Prostate gland (tissue), 2 donors: ENCODE measurements at regions of chr3 and their contacts with region 1.

Region 1: GRCh38 chr3:150763122-150763841 is at the start of gene SIAH2:
- DNase-seq: peak; percentile 94
- H3K4me3 ChIP-seq: peak within 1 kb of the TSS; percentile 74 to 98
- H3K27ac ChIP-seq: peak within 1 kb of the TSS; percentile 98 to 100
- H3K4me1 ChIP-seq: peaks cover 4% of the 10 kb centered on the region
- H3K27me3 ChIP-seq: no peaks in the 10 kb centered on the region
- CTCF ChIP-seq: peak in 2 of 4 experiments; percentile 36 to 46
- POLR2A ChIP-seq: peak; percentile 72
- total RNA-seq, gene SIAH2: 47.4 to 48.9 TPM

Region 2: DNA sequence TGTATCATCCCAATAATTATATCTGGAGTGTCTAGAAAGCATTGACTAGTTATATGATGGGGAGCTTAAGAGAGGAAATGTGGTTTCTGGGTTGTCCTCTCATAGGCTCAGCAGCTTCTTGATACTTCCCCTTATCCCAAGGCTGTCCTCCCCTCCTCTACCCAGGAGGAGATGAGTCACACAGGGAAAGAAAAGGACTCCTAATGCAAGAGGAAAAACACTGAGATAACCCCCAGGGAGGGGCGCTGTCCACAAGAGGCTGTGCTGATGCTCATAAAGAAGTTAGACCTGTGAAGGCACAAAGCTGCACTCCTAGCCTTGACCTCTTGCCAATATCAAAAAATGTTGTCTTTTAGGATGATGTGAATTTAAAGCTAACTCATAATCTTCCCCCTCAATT is 1800.8 kb before region 1 on chr3:
- intact Hi-C with region 1: loop called (anchors 10 kb)
- DNase-seq: no peak
- H3K4me3 ChIP-seq: no peak overlapping the region
- H3K27ac ChIP-seq: no peak overlapping the region
- H3K4me1 ChIP-seq: no peaks in the 10 kb centered on the region
- H3K27me3 ChIP-seq: no peaks in the 10 kb centered on the region
- CTCF ChIP-seq: no peak
- POLR2A ChIP-seq: no peak

Region 3: GRCh38 chr3:150603153-150603979 is 159.9 kb before region 1 on chr3 and contains the start of gene SELENOT:
- intact Hi-C with region 1: loop called (anchors 10 kb)
- DNase-seq: peak; percentile 93
- H3K4me3 ChIP-seq: peak within 1 kb of the TSS; percentile 60 to 84
- H3K27ac ChIP-seq: peak within 1 kb of the TSS; percentile 95 to 96
- H3K4me1 ChIP-seq: no peaks in the 10 kb centered on the region
- H3K27me3 ChIP-seq: no peaks in the 10 kb centered on the region
- CTCF ChIP-seq: peak in 2 of 4 experiments; percentile 26 to 53
- POLR2A ChIP-seq: peak; percentile 97
- total RNA-seq, gene SELENOT: 123 to 126 TPM

Region 4: DNA sequence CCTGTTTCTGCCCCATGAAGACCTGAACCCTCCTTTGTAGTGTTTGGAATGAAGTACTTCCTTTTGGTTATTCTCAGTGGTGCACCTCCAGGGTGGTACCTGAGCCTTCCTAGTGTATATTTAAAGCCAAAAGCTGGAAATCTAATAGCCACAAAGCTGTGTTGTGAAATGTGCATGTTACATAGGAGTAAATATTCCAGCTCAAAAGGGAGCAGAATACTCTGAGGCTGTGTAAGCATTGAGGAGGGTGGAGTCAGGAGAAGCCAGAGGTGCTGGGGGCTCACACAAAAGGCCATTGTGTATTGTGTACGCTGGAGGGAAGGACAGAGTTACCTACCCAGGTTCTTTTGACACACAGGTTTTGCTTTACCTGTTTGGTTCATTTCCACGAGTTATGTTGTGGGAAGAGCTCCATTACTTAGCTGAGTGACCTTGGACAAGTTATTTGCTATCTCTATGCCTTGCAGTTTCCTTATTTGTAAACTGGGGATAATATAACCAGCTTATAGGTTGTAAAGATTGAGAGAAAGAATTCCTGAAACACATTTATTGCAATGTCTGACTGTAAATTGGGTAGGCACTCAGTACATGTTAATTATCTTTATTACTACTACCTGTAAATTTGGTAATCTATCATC is 415.0 kb after region 1 on chr3:
- intact Hi-C with region 1: no loop called
- DNase-seq: no peak
- H3K4me3 ChIP-seq: no peak overlapping the region
- H3K27ac ChIP-seq: no peak overlapping the region
- H3K4me1 ChIP-seq: no peaks in the 10 kb centered on the region
- H3K27me3 ChIP-seq: no peaks in the 10 kb centered on the region
- CTCF ChIP-seq: no peak
- POLR2A ChIP-seq: no peak

Region 5: DNA sequence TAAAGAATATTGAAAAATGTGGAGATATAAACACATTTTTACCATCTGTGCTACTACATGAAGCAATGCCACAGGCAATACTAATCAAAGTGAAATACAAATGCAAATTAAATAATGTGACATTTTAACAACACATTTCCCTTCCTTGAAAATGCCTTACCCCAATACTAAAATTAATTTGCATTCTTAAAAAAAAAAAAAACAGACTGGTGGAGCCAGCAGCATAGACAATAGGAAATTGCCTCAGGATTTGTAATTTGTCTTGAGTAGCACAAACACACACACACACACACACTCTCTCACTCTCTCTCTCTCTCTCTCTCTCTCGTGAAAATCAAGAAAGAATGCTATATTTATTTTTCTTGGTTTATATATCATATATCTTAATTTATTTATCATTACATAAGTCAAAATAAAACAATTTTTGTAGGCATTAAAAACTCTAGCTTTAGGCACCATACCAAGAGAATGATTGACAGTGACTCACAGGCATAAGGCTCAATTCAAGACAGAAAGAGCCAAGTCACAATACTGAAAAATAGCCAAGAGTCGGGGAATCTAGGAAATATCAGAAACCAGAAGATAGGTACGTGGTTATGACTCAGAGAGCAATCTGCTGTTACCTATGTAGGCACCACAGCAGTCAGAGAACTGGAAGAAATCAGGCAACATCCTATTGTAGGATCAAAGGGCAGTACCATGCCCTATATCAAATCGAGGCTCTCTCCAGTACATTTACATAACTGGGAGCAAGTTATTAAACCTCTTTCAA is 1133.1 kb after region 1 on chr3:
- intact Hi-C with region 1: no loop called
- DNase-seq: no peak
- H3K4me3 ChIP-seq: no peak overlapping the region
- H3K27ac ChIP-seq: no peak overlapping the region
- H3K4me1 ChIP-seq: no peaks in the 10 kb centered on the region
- H3K27me3 ChIP-seq: no peaks in the 10 kb centered on the region
- CTCF ChIP-seq: no peak
- POLR2A ChIP-seq: no peak